ENCODE measurements at regions of chr19 and their contacts with region 1.

Region 1: GRCh38 chr19:28737021-28737895 is 475.7 kb downstream of the UQCRFS1 start:
- DNase-seq: no peak
- H3K4me3 ChIP-seq: no peak overlapping the region
- H3K27ac ChIP-seq: no peak overlapping the region
- H3K4me1 ChIP-seq: no peaks in the 10 kb centered on the region
- H3K27me3 ChIP-seq: no peaks in the 10 kb centered on the region
- CTCF ChIP-seq: peak in 3 of 4 experiments; percentile 43 to 67 (median 57)
- POLR2A ChIP-seq: no peak

Region 2: DNA sequence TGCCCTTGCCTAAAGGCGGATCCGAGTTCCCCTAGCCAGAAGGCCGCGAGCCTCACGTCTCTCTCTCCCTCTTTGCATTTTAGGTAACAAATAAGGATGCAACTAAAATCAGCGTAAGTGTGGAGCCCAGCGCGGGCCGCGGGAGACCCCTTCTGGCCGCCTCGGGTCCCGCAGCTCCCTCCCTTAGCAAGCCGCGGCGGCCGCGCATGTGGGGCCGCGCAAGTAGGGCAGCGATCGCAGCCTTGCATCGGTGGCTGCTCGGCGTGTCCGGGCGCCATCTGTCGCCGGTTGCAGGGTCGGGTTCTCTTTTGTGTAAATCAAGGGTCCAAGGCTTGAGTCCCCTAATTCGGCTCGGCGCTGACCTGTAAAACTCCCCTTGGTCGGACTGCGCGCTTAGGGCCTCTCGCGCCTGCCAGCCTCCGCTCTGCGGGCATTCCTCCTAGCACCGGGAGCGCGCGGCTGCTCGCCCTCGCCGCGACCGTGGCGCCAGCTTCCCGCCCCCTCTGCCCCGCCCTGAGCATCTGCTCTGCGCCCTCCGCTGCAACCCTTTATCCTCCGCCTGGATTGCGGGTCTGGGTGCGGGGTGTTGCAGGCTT is 791.2 kb after region 1 on chr19:
- intact Hi-C with region 1: loop called (anchors 10 kb)
- DNase-seq: no peak
- H3K4me3 ChIP-seq: no peak overlapping the region
- H3K27ac ChIP-seq: no peak overlapping the region
- H3K4me1 ChIP-seq: peaks cover 7% of the 10 kb centered on the region
- H3K27me3 ChIP-seq: peaks cover 70% of the 10 kb centered on the region
- CTCF ChIP-seq: peak in 3 of 4 experiments; percentile 30 to 50 (median 46)
- POLR2A ChIP-seq: no peak

Measured in prostate gland (tissue), 2 donors.